ENCODE measurements at regions of chrX and their contacts with region 1.

Region 1: DNA sequence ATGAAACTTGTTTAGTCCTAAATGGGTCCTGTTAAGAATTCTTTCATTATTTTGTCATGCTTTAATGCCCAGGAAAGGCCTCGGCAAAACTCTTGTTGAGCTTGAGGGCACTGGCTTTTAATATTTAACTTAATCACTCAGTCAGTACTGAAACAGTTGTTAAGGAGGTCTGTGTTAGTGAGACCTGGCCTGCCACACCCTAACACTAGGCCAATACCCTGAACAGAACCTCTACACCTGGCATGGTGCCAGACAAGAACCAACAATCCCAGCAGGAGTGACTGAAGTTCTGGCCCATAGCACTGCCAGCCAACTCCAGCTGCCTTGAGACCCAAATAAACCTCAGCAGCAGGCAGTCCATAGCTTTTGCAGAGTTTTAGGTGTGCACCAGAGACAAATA is 85.7 kb upstream of the ITM2A start:
- DNase-seq: no peak
- ATAC-seq: no peak
- H3K4me3 Mint-ChIP-seq: no peak overlapping the region
- H3K27ac Mint-ChIP-seq: no peak overlapping the region
- H3K4me1 Mint-ChIP-seq: peaks cover 2% of the 10 kb centered on the region
- H3K27me3 Mint-ChIP-seq: no peaks in the 10 kb centered on the region
- CTCF ChIP-seq: no peak

Region 2: GRCh38 chrX:79366873-79367749 is 85.8 kb before region 1 on chrX and contains the start of gene ITM2A:
- CTCF ChIA-PET with region 1: no interaction called
- POLR2A ChIA-PET with region 1: no interaction called
- intact Hi-C with region 1: loop called (anchors 5 kb)
- DNase-seq: peak; percentile 29
- ATAC-seq: peak; percentile 81
- H3K4me3 Mint-ChIP-seq: peak within 1 kb of the TSS; percentile 92
- H3K27ac Mint-ChIP-seq: peak within 1 kb of the TSS; percentile 86
- H3K4me1 Mint-ChIP-seq: peaks cover 29% of the 10 kb centered on the region
- H3K27me3 Mint-ChIP-seq: no peaks in the 10 kb centered on the region
- CTCF ChIP-seq: no peak
- total RNA-seq, gene ITM2A: 9.3 and 13.3 TPM in 2 replicates

Region 3: GRCh38 chrX:79477691-79478090 is 24.8 kb after region 1 on chrX:
- CTCF ChIA-PET with region 1: no interaction called
- POLR2A ChIA-PET with region 1: no interaction called
- intact Hi-C with region 1: no loop called
- DNase-seq: no peak
- ATAC-seq: no peak
- H3K4me3 Mint-ChIP-seq: no peak overlapping the region
- H3K27ac Mint-ChIP-seq: no peak overlapping the region
- H3K4me1 Mint-ChIP-seq: no peaks in the 10 kb centered on the region
- H3K27me3 Mint-ChIP-seq: no peaks in the 10 kb centered on the region
- CTCF ChIP-seq: no peak

Measured in activated B cell treated with CpG ODN at 0.5 μM for 24 hours (primary cell).